ENCODE measurements at regions of chr1 and their contacts with region 1.

Region 1: GRCh38 chr1:23634842-23635651 is 56.6 kb upstream of the RPL11 start:
- DNase-seq: peak; percentile 76
- ATAC-seq: peak; percentile 72
- H3K4me3 ChIP-seq: peak overlapping the region; percentile 73
- H3K27ac ChIP-seq: no peak overlapping the region
- H3K4me1 ChIP-seq: 0 out of 2 replicates have a peak, but pooled peaks cover 4% of the 10 kb centered on the region
- H3K27me3 ChIP-seq: no peaks in the 10 kb centered on the region
- CTCF ChIP-seq: peak; percentile 82

Region 2: GRCh38 chr1:23530747-23531561 is 104.1 kb before region 1 on chr1 and contains the start of gene E2F2:
- CTCF ChIA-PET with region 1: interaction called, 10 read pairs
- POLR2A ChIA-PET with region 1: no interaction called
- intact Hi-C with region 1: no loop called
- DNase-seq: peak; percentile 81
- ATAC-seq: peak; percentile 68
- H3K4me3 ChIP-seq: peak within 1 kb of the TSS; percentile 71
- H3K27ac ChIP-seq: peak within 1 kb of the TSS; percentile 29; the same call in 1 of the 2 replicates
- H3K4me1 ChIP-seq: peaks cover 48% of the 10 kb centered on the region
- H3K27me3 ChIP-seq: no peaks in the 10 kb centered on the region
- CTCF ChIP-seq: peak; percentile 30; the same call in 1 of the 2 replicates
- total RNA-seq, gene E2F2: 7.0 and 8.3 TPM in 2 replicates

Region 3: GRCh38 chr1:23539698-23540266 is 95.3 kb before region 1 on chr1:
- CTCF ChIA-PET with region 1: interaction called, 16 read pairs
- POLR2A ChIA-PET with region 1: no interaction called
- intact Hi-C with region 1: loop called (anchors 1 kb)
- DNase-seq: peak; percentile 96
- ATAC-seq: peak; percentile 94
- H3K4me3 ChIP-seq: peak overlapping the region; percentile 49; the same call in 1 of the 2 replicates
- H3K27ac ChIP-seq: no peak overlapping the region
- H3K4me1 ChIP-seq: no peaks in the 10 kb centered on the region
- H3K27me3 ChIP-seq: no peaks in the 10 kb centered on the region
- CTCF ChIP-seq: peak; percentile 94

Region 4: DNA sequence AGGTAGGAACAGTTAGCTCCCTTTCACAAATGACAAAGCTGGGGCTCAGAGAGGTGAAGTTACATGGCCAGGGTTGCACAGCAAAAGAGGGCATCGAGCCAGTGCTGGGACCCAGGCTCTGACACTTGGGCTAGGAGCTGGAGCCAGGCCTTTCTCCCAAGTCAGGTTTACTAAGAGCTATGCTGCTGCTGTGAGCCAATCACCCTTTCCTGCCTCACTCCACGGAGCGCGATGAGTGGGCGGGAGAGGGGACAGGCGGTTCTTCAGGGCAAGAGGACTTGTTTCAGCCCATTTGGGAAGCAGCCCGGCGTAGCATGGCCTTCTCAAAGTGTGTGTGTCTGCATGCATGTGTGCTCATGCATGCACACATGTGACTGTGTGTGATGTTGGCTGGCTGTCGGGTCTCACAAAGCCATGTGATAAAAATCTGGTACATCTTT is 86.3 kb before region 1 on chr1:
- CTCF ChIA-PET with region 1: interaction called, 22 read pairs
- POLR2A ChIA-PET with region 1: no interaction called
- intact Hi-C with region 1: loop called (anchors 1 kb)
- DNase-seq: no peak
- ATAC-seq: no peak
- H3K4me3 ChIP-seq: no peak overlapping the region
- H3K27ac ChIP-seq: no peak overlapping the region
- H3K4me1 ChIP-seq: no peaks in the 10 kb centered on the region
- H3K27me3 ChIP-seq: no peaks in the 10 kb centered on the region
- CTCF ChIP-seq: no peak

Region 5: GRCh38 chr1:23559136-23559984 is 75.7 kb before region 1 on chr1 and contains the start of gene ID3:
- CTCF ChIA-PET with region 1: interaction called, 14 read pairs
- POLR2A ChIA-PET with region 1: interaction called, 6 read pairs
- intact Hi-C with region 1: loop called (anchors 5 kb)
- DNase-seq: peak; percentile 96
- ATAC-seq: peak; percentile 53
- H3K4me3 ChIP-seq: peak within 1 kb of the TSS; percentile 82
- H3K27ac ChIP-seq: peak within 1 kb of the TSS; percentile 33
- H3K4me1 ChIP-seq: peaks cover 63% of the 10 kb centered on the region
- H3K27me3 ChIP-seq: no peaks in the 10 kb centered on the region
- CTCF ChIP-seq: no peak
- total RNA-seq, gene ID3: 77.7 and 92.5 TPM in 2 replicates

Region 6: DNA sequence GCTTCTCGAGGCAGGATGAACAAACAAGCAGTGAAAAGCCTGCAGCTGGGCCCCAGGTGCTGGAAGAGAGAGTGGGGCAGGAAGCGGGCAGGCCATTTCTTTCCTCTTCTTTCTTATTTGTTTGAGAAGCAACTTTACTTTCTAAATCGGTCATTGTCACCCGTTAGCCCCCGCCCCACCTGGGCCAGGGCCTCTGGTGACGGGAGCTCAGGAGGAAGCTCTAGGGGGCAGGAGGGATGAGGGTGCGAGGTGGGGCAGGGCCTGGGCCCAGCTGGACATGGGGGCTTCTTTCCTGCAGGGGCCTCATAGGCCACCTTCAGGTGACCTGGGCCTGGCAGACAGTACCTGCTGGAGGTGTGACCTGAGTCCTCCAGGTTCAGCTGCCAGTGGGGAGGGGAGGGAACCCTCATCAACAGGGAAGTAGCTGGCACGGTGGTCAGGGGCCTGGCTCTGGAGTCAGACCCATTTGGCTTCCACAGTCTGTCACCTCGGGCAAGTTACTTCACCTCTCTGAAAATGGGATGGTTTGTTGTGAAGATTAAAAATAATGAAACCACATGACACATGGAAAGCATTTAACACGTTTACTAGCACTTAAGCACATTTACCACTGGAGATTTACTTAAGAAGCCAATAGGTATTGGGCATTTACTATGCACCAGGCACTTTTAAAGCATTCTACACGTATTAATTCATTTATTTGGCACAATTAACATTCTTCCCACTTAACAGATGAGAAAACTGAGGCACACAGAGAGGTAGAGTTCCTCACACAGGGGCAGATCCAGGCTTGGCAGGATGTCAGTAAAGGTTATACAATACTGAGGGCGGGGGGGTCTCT is 21.6 kb before region 1 on chr1:
- CTCF ChIA-PET with region 1: no interaction called
- POLR2A ChIA-PET with region 1: no interaction called
- intact Hi-C with region 1: no loop called
- DNase-seq: no peak
- ATAC-seq: no peak
- H3K4me3 ChIP-seq: no peak overlapping the region
- H3K27ac ChIP-seq: no peak overlapping the region
- H3K4me1 ChIP-seq: no peaks in the 10 kb centered on the region
- H3K27me3 ChIP-seq: no peaks in the 10 kb centered on the region
- CTCF ChIP-seq: no peak

Region 7: GRCh38 chr1:23691499-23692307 is 56.7 kb after region 1 on chr1 and contains the start of gene RPL11:
- CTCF ChIA-PET with region 1: no interaction called
- POLR2A ChIA-PET with region 1: no interaction called
- intact Hi-C with region 1: no loop called
- DNase-seq: peak; percentile 97
- ATAC-seq: peak; percentile 99
- H3K4me3 ChIP-seq: peak within 1 kb of the TSS; percentile 95
- H3K27ac ChIP-seq: peak within 1 kb of the TSS; percentile 47
- H3K4me1 ChIP-seq: peaks cover 21% of the 10 kb centered on the region
- H3K27me3 ChIP-seq: no peaks in the 10 kb centered on the region
- CTCF ChIP-seq: peak; percentile 66
- total RNA-seq, gene RPL11: 1,031 and 1,441 TPM in 2 replicates

Measured in PC-3 (cell line).